ENCODE measurements at regions of chr11 and their contacts with region 1.

Region 1: GRCh38 chr11:115030166-115030565 is 351.8 kb downstream of the NXPE2 start:
- DNase-seq: no peak
- ATAC-seq: no peak

Region 2: GRCh38 chr11:114964676-114965214 is 65.4 kb before region 1 on chr11:
- intact Hi-C with region 1: loop called in 1 of 2 experiments (anchors 10 kb)
- DNase-seq: no peak
- ATAC-seq: no peak

Region 3: GRCh38 chr11:115736146-115736545 is 706.0 kb after region 1 on chr11:
- intact Hi-C with region 1: no loop called
- DNase-seq: no peak
- ATAC-seq: no peak